Activated CD4-positive, alpha-beta memory T cell treated with anti-CD3 and anti-CD28 coated beads for 36 hours (primary cell): ENCODE measurements at regions of chr3 and their contacts with region 1.

Region 1: DNA sequence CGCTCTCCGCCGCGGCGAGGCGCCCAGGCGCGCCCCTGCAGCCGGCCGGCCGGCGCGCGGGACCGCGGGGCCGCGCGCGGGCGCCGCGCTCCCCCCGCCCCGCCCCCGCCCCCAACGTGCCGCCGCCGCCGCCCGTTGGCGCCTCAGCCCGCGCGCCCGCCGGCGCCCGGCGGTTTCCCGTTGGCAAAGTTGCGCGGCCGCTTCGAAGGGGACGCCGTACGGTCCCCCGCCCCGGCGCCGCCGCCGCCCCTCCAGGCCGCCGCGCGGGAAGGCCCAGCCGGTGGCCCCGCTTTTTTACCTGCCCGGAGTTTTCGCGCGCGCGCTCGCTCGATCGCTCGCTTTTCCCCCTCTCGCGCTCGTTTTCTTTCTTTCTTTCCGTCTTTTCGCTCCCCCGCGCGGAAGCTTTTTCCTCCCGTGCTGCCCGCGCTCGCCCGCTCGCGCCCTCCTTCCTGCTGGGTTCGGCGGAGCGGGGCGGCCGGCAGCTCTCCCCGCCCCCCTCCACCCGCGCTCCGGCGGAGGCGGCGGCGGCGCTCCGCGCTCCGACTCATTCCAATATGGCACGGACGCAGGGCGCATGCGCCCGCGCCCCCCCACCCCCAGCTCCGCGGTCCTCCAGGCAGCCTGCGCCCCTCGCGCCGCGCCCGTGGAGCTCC is at the start of gene SFMBT1:
- DNase-seq: peak; percentile 83
- H3K4me3 Mint-ChIP-seq: peak within 1 kb of the TSS; percentile 96
- H3K27ac Mint-ChIP-seq: peak within 1 kb of the TSS; percentile 97
- H3K4me1 Mint-ChIP-seq: peaks cover 44% of the 10 kb centered on the region
- H3K27me3 Mint-ChIP-seq: peaks cover 2% of the 10 kb centered on the region
- total RNA-seq, gene SFMBT1: 22.1 to 22.8 TPM

Region 2: DNA sequence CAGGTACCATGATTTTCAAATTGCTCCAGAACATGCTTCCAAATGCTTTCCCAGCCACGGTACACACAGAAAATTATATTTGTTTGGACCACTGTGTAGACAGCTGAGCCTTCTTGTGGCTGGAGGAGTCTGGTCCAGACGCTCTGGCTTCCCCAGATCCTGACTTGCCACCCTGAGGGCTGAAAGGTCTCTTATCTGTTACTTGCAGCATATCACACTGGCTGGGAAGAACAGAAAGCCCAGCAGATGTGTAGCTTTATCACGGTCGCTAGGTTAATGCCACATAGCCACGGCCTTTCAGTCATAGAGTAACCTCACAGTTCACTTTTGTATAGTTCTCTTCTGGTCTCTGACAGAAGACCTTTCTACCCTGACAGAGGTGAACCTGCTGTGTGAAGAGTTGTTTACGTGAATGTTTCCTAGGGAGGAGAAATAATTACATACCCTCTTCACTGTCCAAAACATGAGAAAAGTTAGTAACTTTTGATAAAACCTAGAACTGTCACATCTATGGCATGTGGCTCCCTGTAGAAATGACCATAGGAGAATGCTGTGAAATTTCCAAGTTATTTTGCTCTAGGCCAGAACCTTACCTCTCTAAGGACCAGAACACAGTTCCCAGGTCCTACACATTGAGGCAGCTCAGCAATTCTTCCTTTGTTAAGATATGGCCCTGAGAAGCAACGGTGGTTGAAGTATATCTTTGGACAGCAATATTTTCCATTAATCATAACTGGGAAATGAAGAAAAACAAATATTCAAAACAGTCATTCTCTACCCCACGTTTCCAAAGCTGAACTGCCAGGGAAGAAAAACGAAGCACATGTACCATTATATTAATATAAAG is 132.5 kb before region 1 on chr3:
- CTCF ChIA-PET with region 1: no interaction called
- POLR2A ChIA-PET with region 1: no interaction called
- intact Hi-C with region 1: no loop called
- DNase-seq: no peak
- H3K4me3 Mint-ChIP-seq: no peak overlapping the region
- H3K27ac Mint-ChIP-seq: no peak overlapping the region
- H3K4me1 Mint-ChIP-seq: peaks cover 4% of the 10 kb centered on the region
- H3K27me3 Mint-ChIP-seq: no peaks in the 10 kb centered on the region

Region 3: GRCh38 chr3:52983336-52983807 is 62.3 kb before region 1 on chr3:
- CTCF ChIA-PET with region 1: interaction called, 5 read pairs
- POLR2A ChIA-PET with region 1: interaction called, 5 read pairs
- intact Hi-C with region 1: loop called (anchors 1 kb)
- DNase-seq: peak; percentile 86
- H3K4me3 Mint-ChIP-seq: peak overlapping the region; percentile 16
- H3K27ac Mint-ChIP-seq: peak overlapping the region; percentile 72
- H3K4me1 Mint-ChIP-seq: peaks cover 38% of the 10 kb centered on the region
- H3K27me3 Mint-ChIP-seq: no peaks in the 10 kb centered on the region

Region 4: DNA sequence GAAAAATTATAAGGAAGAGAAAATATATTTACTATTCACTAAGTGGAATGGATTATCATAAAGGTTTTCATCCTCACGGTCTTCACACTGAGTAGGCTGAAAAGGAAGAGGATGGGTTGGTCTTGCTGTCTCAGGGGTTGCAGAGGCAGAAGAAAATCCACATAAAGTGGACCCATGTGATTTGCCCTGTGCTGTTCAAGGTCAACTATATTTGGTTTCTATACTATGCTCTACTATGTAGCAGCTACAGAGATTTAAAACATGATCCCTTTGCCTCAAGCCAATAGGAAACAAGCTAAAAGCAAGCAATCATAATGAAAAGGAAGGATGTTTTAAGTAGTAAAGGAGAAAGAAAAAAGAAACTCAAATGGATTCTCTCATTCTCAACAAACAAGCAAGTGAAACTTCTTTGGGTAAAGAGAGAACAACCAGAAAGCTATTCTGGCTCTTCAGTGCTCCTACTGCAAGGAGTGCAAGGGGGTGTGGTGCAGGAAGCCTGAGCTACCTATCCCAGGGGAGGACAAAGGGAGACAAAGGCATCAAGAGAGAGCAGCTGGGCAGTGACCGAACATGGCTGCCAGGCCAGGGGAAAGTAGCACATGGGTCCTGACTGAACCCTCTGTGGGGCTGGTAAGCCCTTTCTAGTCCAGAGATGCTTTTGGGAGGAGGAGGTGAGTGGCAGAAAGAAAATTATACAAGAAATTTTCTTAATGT is 35.7 kb before region 1 on chr3:
- CTCF ChIA-PET with region 1: no interaction called
- POLR2A ChIA-PET with region 1: no interaction called
- intact Hi-C with region 1: no loop called
- DNase-seq: no peak
- H3K4me3 Mint-ChIP-seq: no peak overlapping the region
- H3K27ac Mint-ChIP-seq: no peak overlapping the region
- H3K4me1 Mint-ChIP-seq: peaks cover 34% of the 10 kb centered on the region
- H3K27me3 Mint-ChIP-seq: no peaks in the 10 kb centered on the region

Region 5: GRCh38 chr3:53083521-53083920 is 37.9 kb after region 1 on chr3:
- CTCF ChIA-PET with region 1: no interaction called
- POLR2A ChIA-PET with region 1: no interaction called
- intact Hi-C with region 1: no loop called
- DNase-seq: no peak
- H3K4me3 Mint-ChIP-seq: no peak overlapping the region
- H3K27ac Mint-ChIP-seq: no peak overlapping the region
- H3K4me1 Mint-ChIP-seq: peaks cover 2% of the 10 kb centered on the region
- H3K27me3 Mint-ChIP-seq: no peaks in the 10 kb centered on the region